ENCODE measurements at regions of chr16 and their contacts with region 1.

Region 1: GRCh38 chr16:8572919-8573724 is 17.2 kb downstream of the TMEM114 start:
- DNase-seq: peak in 1 of 2 experiments; percentile 38
- H3K4me3 ChIP-seq: no peak overlapping the region
- H3K4me3 Mint-ChIP-seq: no peak overlapping the region
- H3K27ac Mint-ChIP-seq: peak overlapping the region; percentile 64
- H3K4me1 ChIP-seq: peaks cover 6% of the 10 kb centered on the region; the same call in 1 of the 2 replicates
- H3K4me1 Mint-ChIP-seq: no peaks in the 10 kb centered on the region
- H3K27me3 ChIP-seq: no peaks in the 10 kb centered on the region
- H3K27me3 Mint-ChIP-seq: no peaks in the 10 kb centered on the region
- CTCF ChIP-seq: peak; percentile 43 to 51

Region 2: GRCh38 chr16:8402981-8403843 is 169.9 kb before region 1 on chr16:
- CTCF ChIA-PET with region 1: no interaction called
- POLR2A ChIA-PET with region 1: no interaction called
- intact Hi-C with region 1: no loop called
- DNase-seq: no peak
- H3K4me3 ChIP-seq: no peak overlapping the region
- H3K4me3 Mint-ChIP-seq: no peak overlapping the region
- H3K27ac Mint-ChIP-seq: no peak overlapping the region
- H3K4me1 ChIP-seq: 0 out of 2 replicates have a peak, but pooled peaks cover 2% of the 10 kb centered on the region
- H3K4me1 Mint-ChIP-seq: no peaks in the 10 kb centered on the region
- H3K27me3 ChIP-seq: no peaks in the 10 kb centered on the region
- H3K27me3 Mint-ChIP-seq: peaks cover 2% of the 10 kb centered on the region
- CTCF ChIP-seq: no peak

Region 3: GRCh38 chr16:8474587-8474986 is 98.5 kb before region 1 on chr16:
- CTCF ChIA-PET with region 1: no interaction called
- POLR2A ChIA-PET with region 1: no interaction called
- intact Hi-C with region 1: no loop called
- DNase-seq: no peak
- H3K4me3 ChIP-seq: no peak overlapping the region
- H3K4me3 Mint-ChIP-seq: no peak overlapping the region
- H3K27ac Mint-ChIP-seq: no peak overlapping the region
- H3K4me1 ChIP-seq: no peaks in the 10 kb centered on the region
- H3K4me1 Mint-ChIP-seq: no peaks in the 10 kb centered on the region
- H3K27me3 ChIP-seq: no peaks in the 10 kb centered on the region
- H3K27me3 Mint-ChIP-seq: peaks cover 15% of the 10 kb centered on the region
- CTCF ChIP-seq: no peak

Region 4: DNA sequence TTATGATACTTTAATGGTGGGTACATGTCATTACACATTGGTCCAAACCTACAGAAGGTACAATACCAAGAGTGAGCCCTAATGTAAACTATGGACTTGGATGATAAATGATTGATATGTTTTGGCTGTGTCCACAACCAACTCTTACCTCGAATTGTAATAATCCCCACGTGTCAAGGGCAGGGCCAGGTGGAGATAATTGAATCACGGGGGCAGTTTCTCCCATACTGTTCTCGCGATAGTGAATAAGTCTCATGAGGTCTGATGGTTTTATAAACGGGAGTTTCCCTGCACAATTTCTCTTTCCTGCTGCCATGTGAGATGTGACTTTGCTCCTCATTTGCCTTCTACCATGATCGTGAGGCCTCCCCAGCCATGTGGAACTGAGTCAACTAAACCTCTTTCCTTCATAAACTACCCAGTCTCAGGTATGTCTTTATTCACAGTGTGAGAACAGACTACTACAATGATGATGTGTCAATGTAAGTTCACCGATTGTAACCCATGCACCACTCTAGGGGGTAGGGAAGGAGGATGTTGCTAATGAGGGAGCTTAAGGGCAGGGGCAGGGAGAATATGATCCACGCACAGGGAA is 41.4 kb after region 1 on chr16:
- CTCF ChIA-PET with region 1: no interaction called
- POLR2A ChIA-PET with region 1: no interaction called
- intact Hi-C with region 1: loop called (anchors 2 kb)
- DNase-seq: no peak
- H3K4me3 ChIP-seq: no peak overlapping the region
- H3K4me3 Mint-ChIP-seq: no peak overlapping the region
- H3K27ac Mint-ChIP-seq: no peak overlapping the region
- H3K4me1 ChIP-seq: no peaks in the 10 kb centered on the region
- H3K4me1 Mint-ChIP-seq: no peaks in the 10 kb centered on the region
- H3K27me3 ChIP-seq: no peaks in the 10 kb centered on the region
- H3K27me3 Mint-ChIP-seq: peaks cover 6% of the 10 kb centered on the region
- CTCF ChIP-seq: no peak

Region 5: DNA sequence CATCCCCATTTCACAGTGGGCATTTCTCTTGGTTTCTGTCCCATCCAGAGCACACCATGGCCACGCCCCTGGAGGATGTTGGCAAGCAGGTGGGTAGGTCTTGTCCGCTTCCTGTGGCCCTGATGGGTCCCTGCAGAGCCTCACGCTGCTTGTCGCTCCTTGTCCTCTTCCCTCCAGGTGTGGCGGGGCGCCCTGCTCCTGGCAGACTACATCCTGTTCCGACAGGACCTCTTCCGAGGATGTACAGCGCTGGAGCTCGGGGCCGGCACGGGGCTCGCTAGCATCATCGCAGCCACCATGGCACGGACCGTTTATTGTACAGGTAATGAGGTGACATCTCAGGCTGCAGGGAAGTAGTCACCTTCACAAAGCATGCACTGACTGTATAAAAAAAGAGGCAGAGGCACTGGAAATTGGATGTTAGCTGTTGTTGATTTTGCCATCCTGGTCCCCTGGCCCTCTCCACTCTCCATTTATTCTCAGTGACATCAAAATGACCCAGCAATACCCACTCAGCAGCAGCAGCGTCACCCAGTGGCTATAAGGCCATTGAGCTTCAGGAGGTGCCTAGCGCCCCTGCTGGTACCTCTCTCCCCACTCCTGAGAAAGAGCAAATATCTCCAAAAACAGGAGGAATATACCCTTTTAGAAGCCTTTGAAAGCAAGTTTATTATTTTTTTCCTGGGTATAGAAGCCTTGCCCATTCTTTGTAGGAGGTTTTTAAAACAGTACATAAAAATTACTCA is 62.0 kb after region 1 on chr16:
- CTCF ChIA-PET with region 1: no interaction called
- POLR2A ChIA-PET with region 1: no interaction called
- intact Hi-C with region 1: loop called (anchors 1 kb)
- DNase-seq: peak in 1 of 2 experiments; percentile 15
- H3K4me3 ChIP-seq: no peak overlapping the region
- H3K4me3 Mint-ChIP-seq: no peak overlapping the region
- H3K27ac Mint-ChIP-seq: no peak overlapping the region
- H3K4me1 ChIP-seq: no peaks in the 10 kb centered on the region
- H3K4me1 Mint-ChIP-seq: no peaks in the 10 kb centered on the region
- H3K27me3 ChIP-seq: no peaks in the 10 kb centered on the region
- H3K27me3 Mint-ChIP-seq: no peaks in the 10 kb centered on the region
- CTCF ChIP-seq: peak; percentile 31 to 69

Measured in Caco-2 (cell line).